Activated CD4-positive, alpha-beta memory T cell treated with anti-CD3 and anti-CD28 coated beads, Interleukin-2, amount 10 ng/mL, durations not matched to agents 7 days and 5 days (primary cell): ENCODE measurements at regions of chr6 and their contacts with region 1.

Region 1: GRCh38 chr6:399785-400534 is 8.4 kb downstream of the IRF4 start:
- DNase-seq: peak; percentile 67
- H3K4me3 Mint-ChIP-seq: peak overlapping the region; percentile 53
- H3K27ac Mint-ChIP-seq: peak overlapping the region; percentile 82
- H3K4me1 Mint-ChIP-seq: peaks cover 95% of the 10 kb centered on the region
- H3K27me3 Mint-ChIP-seq: no peaks in the 10 kb centered on the region

Region 2: DNA sequence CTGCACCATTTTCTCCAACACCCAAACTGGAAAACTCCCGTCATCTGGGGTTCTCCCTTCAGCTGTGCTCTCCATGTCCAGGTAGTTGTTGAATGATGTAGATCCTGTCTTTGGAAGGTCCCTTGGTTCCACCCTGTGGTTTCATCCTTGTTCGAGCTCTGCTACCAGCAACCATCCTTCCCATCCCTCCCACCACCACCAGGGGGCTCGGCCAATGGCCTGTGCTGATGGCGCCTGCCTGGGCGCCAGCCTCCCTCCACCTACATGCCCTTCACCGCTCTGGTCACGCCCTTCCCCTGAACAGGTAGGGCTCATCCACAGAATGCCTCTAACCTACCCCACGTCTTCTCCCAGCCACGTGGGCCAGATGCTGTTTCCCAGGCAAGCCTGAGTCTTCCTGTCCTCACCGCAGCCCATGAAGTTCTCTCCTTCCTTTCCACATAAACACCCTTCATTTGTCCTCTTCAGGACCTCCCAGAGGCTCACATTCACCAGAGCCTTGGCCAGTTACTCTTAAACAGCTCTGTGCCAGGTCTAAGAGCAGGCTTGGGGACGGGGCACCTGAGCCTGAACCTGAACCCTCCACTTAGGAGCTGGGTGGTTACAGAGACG is 182.8 kb before region 1 on chr6:
- CTCF ChIA-PET with region 1: no interaction called
- POLR2A ChIA-PET with region 1: interaction called, 137 read pairs
- DNase-seq: no peak
- H3K4me3 Mint-ChIP-seq: no peak overlapping the region
- H3K27ac Mint-ChIP-seq: peak overlapping the region; percentile 11
- H3K4me1 Mint-ChIP-seq: peaks cover 65% of the 10 kb centered on the region
- H3K27me3 Mint-ChIP-seq: peaks cover 12% of the 10 kb centered on the region

Region 3: GRCh38 chr6:373751-374724 is 25.9 kb before region 1 on chr6:
- CTCF ChIA-PET with region 1: no interaction called
- POLR2A ChIA-PET with region 1: no interaction called
- DNase-seq: no peak
- H3K4me3 Mint-ChIP-seq: no peak overlapping the region
- H3K27ac Mint-ChIP-seq: no peak overlapping the region
- H3K4me1 Mint-ChIP-seq: peaks cover 5% of the 10 kb centered on the region
- H3K27me3 Mint-ChIP-seq: peaks cover 30% of the 10 kb centered on the region

Region 4: DNA sequence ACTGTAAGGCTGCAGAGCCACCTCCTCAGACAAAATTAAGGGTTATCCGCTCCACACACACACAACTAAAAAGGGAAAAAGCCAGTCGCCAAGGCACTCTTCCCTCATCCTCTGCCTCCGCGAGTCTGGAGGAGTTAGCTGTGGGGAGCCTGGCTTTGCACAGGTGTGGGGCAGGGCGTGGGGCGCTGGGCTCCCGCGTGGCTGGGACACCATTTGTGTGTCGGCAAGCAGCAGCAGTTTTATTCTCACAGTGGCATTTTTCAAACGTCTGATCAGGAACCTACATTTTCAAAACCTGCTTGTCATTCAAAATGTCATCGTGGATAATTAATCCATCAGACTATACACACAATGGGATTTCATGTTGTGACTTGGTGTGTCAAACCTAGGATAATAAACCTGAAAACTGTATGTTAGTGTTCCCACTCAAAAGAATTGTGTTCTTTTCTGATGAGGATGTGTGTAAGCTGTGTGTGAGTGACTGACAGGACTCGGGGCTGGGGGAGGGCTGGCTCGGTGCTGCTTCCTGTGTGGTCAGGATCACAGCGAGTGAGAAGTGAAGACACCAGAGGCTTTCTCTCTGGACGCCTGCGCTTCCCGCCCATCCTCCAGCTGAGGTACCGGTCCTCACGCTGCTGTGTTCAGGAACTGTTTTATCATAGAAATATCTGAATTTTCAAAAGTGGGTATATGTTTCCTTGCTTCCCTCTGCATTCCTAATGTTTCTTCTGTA is 74.7 kb after region 1 on chr6:
- CTCF ChIA-PET with region 1: interaction called, 3 read pairs
- POLR2A ChIA-PET with region 1: interaction called, 26 read pairs
- DNase-seq: peak; percentile 87
- H3K4me3 Mint-ChIP-seq: peak overlapping the region; percentile 46
- H3K27ac Mint-ChIP-seq: peak overlapping the region; percentile 42
- H3K4me1 Mint-ChIP-seq: peaks cover 60% of the 10 kb centered on the region
- H3K27me3 Mint-ChIP-seq: peaks cover 43% of the 10 kb centered on the region

Region 5: DNA sequence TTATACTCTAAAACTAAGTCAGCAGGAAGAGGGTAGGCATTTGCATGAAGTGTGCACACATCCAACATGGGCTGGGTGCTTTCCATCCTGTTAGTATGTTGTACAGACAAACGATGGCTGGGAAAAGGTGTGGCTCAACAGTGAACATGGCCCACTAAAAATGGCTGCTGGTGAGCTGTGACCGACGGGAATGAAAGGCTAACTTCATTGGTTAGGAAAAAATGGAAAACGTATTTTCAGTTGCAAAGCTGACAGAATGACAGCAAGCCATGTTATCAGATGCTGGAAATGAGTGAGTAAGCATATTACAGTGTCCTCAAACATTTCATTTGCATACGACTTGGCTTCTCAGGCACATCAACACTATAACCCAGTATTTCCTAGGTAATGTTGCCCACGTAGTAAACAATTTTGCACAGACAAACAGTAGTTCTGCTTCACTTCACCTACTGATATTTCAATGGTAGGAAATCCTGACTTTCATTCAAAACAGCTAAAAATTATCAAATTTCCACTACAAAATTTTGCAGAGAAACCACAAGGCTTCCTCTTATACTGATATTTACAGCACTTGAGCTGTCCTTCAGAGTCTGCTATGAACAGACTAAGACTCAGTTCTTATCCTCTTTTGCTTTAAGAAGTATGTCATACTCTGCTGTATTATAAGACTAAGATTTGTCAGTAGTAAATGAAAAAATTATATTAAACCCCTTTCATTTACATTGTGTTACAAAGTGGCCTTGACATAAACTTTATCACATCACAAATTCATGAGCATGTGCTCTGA is 90.5 kb after region 1 on chr6:
- CTCF ChIA-PET with region 1: interaction called, 4 read pairs
- POLR2A ChIA-PET with region 1: interaction called, 50 read pairs
- DNase-seq: peak; percentile 42
- H3K4me3 Mint-ChIP-seq: peak overlapping the region; percentile 45
- H3K27ac Mint-ChIP-seq: peak overlapping the region; percentile 93
- H3K4me1 Mint-ChIP-seq: peaks cover 79% of the 10 kb centered on the region
- H3K27me3 Mint-ChIP-seq: no peaks in the 10 kb centered on the region

Region 6: GRCh38 chr6:498795-499231 is 98.9 kb after region 1 on chr6:
- CTCF ChIA-PET with region 1: no interaction called
- POLR2A ChIA-PET with region 1: interaction called, 50 read pairs
- DNase-seq: peak; percentile 72
- H3K4me3 Mint-ChIP-seq: peak overlapping the region; percentile 65
- H3K27ac Mint-ChIP-seq: peak overlapping the region; percentile 88
- H3K4me1 Mint-ChIP-seq: peaks cover 80% of the 10 kb centered on the region
- H3K27me3 Mint-ChIP-seq: no peaks in the 10 kb centered on the region